ENCODE measurements at regions of chr20 and their contacts with region 1.

Region 1: DNA sequence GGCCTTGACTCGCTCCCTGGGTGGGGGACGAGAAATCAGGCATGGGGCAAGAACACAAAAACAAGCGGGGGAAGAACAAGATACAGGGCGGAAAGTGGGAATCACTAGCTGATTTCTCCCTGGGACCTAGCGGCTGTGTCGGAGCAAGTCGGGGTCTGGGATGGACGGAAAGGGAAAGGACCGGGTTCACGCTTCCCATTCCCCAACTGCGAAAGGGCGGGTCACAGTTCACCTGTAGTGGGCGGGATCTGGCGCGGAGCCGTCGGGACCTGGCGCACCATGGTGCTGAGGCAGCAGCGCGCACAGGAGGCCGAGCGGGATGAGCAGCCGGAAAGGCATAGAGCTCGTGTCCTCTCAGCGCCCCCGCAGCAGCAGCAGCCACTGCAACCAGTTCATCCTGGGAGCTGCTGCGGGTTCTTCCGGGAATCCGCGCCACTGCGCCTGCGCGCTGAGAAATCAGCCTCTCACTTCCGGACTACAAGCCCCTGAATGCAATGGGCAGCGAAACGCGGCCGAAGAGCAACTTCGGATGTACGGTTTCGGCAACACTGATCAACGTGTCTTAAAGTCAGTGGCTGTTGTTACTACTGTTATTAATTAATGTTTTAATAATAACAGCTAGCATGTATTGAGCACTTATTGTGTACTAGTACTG is at the start of gene EDEM2:
- DNase-seq: peak; percentile 92 to 96 (median 95)
- H3K4me3 ChIP-seq: peak within 1 kb of the TSS; percentile 57 to 98 (median 84)
- H3K27ac ChIP-seq: peak within 1 kb of the TSS; percentile 9 to 90 (median 73)
- H3K27me3 ChIP-seq: no peaks in the 10 kb centered on the region
- CTCF ChIP-seq: peak in 48 of 56 donors; percentile 10 to 68 (median 46)
- total RNA-seq, gene EDEM2: 6.3 to 15.8 (median 10.3) TPM

Region 2: DNA sequence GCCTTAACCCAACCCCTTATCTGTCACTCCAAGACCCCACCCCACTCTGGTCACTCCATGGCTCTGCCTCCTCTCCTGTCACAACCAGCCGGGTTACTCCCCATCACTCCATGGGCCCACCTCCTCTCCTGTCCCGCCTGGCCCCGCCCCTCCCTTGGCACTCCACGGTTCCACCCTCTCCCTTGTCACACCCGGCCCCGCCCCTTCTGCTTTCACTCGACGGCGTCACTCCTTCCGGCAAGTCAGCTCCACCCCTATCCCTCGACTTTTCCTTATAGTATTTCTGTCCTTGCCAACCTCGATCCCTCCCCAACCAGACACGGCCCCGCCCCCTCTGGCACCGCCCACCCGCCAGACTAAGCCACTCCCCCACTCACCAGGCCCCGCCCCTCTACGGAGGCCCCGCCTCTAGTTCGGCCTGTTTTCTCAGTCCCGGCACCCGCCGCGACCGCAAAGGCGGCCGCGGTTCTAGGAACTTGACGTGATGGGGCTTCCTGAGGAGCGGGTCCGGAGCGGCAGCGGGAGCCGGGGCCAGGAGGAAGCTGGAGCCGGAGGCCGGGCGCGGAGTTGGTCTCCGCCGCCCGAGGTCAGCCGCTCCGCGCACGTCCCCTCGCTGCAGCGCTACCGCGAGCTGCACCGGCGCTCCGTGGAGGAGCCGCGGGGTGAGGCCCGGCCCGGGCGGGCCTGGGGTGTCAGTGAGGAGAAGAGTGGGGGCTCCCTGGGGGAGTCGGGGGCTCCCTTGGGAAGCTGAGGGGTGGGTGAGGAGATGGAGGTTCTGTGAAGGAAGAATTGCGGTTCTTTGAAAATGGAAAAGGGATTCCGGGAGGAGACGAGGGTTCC is 270.7 kb before region 1 on chr20 and contains the start of gene ACSS2:
- intact Hi-C with region 1: loop called in 1 of 2 experiments (anchors 10 kb)
- DNase-seq: peak; percentile 93 to 100 (median 98)
- H3K4me3 ChIP-seq: peak within 1 kb of the TSS; percentile 58 to 95 (median 87)
- H3K27ac ChIP-seq: peak within 1 kb of the TSS; percentile 39 to 96 (median 88)
- H3K27me3 ChIP-seq: no peaks in the 10 kb centered on the region
- CTCF ChIP-seq: peak in 11 of 56 donors; percentile 2 to 41 (median 12)
- total RNA-seq, gene ACSS2: 35.5 to 131 (median 55.8) TPM

Region 3: DNA sequence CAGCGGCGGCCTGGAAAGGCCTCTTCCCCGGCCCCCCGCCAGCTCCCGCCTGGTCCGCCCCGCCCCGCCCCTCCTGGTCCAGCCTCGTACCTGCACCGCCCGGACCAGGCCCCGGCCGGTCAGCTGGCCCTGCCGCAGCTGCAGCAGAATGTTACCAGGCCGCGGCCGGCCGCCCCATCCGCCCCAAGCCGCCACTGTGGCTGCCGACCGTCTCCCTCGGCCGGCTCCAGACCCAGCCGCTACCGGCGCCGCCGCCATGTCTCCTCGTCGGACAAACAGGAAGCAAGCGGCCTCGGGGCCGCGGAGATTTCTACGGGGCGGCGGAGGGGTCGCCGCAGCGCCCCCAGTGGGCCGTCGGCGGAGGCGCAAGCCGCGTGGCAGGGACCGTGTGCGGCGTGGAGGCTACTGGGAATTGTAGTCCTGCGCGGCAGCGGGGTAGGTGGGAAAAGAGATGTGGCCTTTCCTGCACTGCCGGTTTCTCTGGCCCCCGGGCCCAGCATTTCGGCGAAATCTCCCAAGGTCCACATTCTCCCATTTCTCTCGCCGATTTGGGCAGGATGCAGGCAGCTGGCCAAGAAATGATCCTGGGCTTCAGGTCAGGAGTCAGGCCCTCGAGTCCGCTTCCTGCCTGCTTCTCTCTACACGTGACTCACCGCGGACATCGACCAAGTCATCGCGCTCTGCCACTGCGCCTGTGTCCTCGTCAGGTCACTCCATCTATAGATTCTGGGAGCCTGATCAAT is 54.4 kb before region 1 on chr20 and contains the start of gene TRPC4AP:
- intact Hi-C with region 1: loop called (anchors 5 kb)
- DNase-seq: peak; percentile 73 to 92 (median 86)
- H3K4me3 ChIP-seq: peak within 1 kb of the TSS; percentile 75 to 98 (median 94)
- H3K27ac ChIP-seq: peak within 1 kb of the TSS; percentile 77 to 98 (median 94)
- H3K27me3 ChIP-seq: no peaks in the 10 kb centered on the region
- CTCF ChIP-seq: peak; percentile 80 to 99 (median 96)
- total RNA-seq, gene TRPC4AP: 43.4 to 98.1 (median 66.6) TPM

Region 4: GRCh38 chr20:35207950-35208611 is 61.0 kb after region 1 on chr20:
- intact Hi-C with region 1: loop called in 1 of 2 experiments (anchors 5 kb)
- DNase-seq: peak in 9 of 10 donors; percentile 48 to 84 (median 74)
- H3K4me3 ChIP-seq: peak overlapping the region in 7 of 59 donors; percentile 2 to 28 (median 10)
- H3K27ac ChIP-seq: peak overlapping the region in 48 of 59 donors; percentile 1 to 88 (median 55)
- H3K27me3 ChIP-seq: no peaks in the 10 kb centered on the region
- CTCF ChIP-seq: peak; percentile 63 to 91 (median 84)

Region 5: GRCh38 chr20:35273449-35273848 is 126.4 kb after region 1 on chr20:
- intact Hi-C with region 1: loop called in 1 of 2 experiments (anchors 5 kb)
- DNase-seq: peak in 7 of 10 donors; percentile 41 to 92 (median 75)
- H3K4me3 ChIP-seq: no peak overlapping the region
- H3K27ac ChIP-seq: peak overlapping the region in 5 of 59 donors; percentile 17 to 93 (median 23)
- H3K27me3 ChIP-seq: no peaks in the 10 kb centered on the region
- CTCF ChIP-seq: no peak

Region 6: DNA sequence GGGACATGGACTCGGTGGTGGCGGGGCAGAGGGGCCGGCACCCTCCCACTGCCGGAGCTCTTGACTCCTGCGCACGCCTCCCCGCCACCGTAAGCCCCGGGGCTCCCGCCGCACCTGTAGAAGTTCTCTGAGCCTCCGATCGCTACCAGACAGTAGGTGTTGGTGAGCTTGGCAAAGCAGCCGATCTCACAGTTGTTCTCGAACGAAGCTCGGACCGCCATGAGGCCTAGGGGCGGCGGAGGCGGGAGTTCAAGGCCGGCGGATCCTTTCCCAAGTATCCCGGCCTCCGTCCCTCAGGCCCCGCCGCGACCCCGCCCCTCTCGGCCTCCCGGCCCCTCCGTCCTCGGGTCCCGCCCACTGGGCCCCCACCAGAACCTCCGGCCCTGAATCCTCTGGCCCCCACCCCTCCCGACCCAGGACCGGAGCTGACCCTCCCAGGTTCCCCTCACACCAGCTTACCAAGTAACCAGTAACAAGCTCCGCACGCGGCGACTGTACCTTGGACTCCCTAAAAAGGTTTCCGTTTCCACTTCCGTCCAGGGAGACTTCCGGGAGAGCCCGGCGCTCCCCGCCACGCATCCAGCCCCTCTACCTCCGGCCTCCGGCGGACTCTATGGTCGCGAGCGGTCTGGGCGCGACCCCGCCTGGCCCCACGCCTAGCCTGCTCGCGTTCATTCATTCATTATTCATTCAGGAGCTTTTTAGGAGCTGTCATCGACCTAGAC is 137.4 kb after region 1 on chr20 and contains the start of gene EIF6:
- intact Hi-C with region 1: loop called in 1 of 2 experiments (anchors 5 kb)
- DNase-seq: peak; percentile 60 to 89 (median 81)
- H3K4me3 ChIP-seq: peak within 1 kb of the TSS; percentile 62 to 98 (median 92)
- H3K27ac ChIP-seq: peak within 1 kb of the TSS in 57 of 59 donors; percentile 30 to 93 (median 78)
- H3K27me3 ChIP-seq: no peaks in the 10 kb centered on the region
- CTCF ChIP-seq: peak in 6 of 56 donors; percentile 6 to 21 (median 13)
- total RNA-seq, gene EIF6: 28.3 to 69.2 (median 53.1) TPM

Region 7: GRCh38 chr20:35454881-35455609 is 308.0 kb after region 1 on chr20 and contains the start of gene CEP250:
- intact Hi-C with region 1: loop called (anchors 5 to 10 kb)
- DNase-seq: peak; percentile 82 to 94 (median 92)
- H3K4me3 ChIP-seq: peak within 1 kb of the TSS; percentile 68 to 99 (median 91)
- H3K27ac ChIP-seq: peak within 1 kb of the TSS; percentile 67 to 99 (median 96)
- H3K27me3 ChIP-seq: no peaks in the 10 kb centered on the region
- CTCF ChIP-seq: peak in 20 of 56 donors; percentile 1 to 47 (median 16)
- total RNA-seq, gene CEP250: 39.1 to 99.6 (median 61.8) TPM

Measured in dorsolateral prefrontal cortex (tissue), 120 donors.